CD8-positive, alpha-beta T cell (primary cell): ENCODE measurements at regions of chr6 and their contacts with region 1.

Region 1: GRCh38 chr6:134640975-134641429 is 308.9 kb downstream of the ALDH8A1 start:
- DNase-seq: peak; percentile 53 to 86 (median 77)
- ATAC-seq: peak; percentile 97
- H3K4me3 ChIP-seq: no peak overlapping the region
- H3K4me3 Mint-ChIP-seq: no peak overlapping the region
- H3K27ac ChIP-seq: no peak overlapping the region
- H3K27ac Mint-ChIP-seq: no peak overlapping the region
- H3K4me1 ChIP-seq: no peaks in the 10 kb centered on the region
- H3K4me1 Mint-ChIP-seq: peaks cover 10% of the 10 kb centered on the region
- H3K27me3 ChIP-seq: no peaks in the 10 kb centered on the region
- H3K27me3 Mint-ChIP-seq: no peaks in the 10 kb centered on the region
- CTCF ChIP-seq: peak; percentile 89

Region 2: GRCh38 chr6:134183844-134184243 is 457.2 kb before region 1 on chr6:
- CTCF ChIA-PET with region 1: interaction called, 65 read pairs
- POLR2A ChIA-PET with region 1: interaction called, 15 read pairs
- intact Hi-C with region 1: no loop called
- DNase-seq: no peak
- ATAC-seq: no peak
- H3K4me3 ChIP-seq: no peak overlapping the region
- H3K4me3 Mint-ChIP-seq: no peak overlapping the region
- H3K27ac ChIP-seq: no peak overlapping the region
- H3K27ac Mint-ChIP-seq: no peak overlapping the region
- H3K4me1 ChIP-seq: peaks cover 5% of the 10 kb centered on the region
- H3K4me1 Mint-ChIP-seq: peaks cover 17% of the 10 kb centered on the region
- H3K27me3 ChIP-seq: peaks cover 0 to 3% of the 10 kb centered on the region in 2 experiments
- H3K27me3 Mint-ChIP-seq: no peaks in the 10 kb centered on the region
- CTCF ChIP-seq: no peak

Region 3: GRCh38 chr6:134389129-134389528 is 251.9 kb before region 1 on chr6:
- CTCF ChIA-PET with region 1: no interaction called
- POLR2A ChIA-PET with region 1: no interaction called
- intact Hi-C with region 1: loop called in 1 of 2 experiments (anchors 5 kb)
- DNase-seq: peak in 1 of 9 experiments; percentile 27
- ATAC-seq: no peak
- H3K4me3 ChIP-seq: no peak overlapping the region
- H3K4me3 Mint-ChIP-seq: no peak overlapping the region
- H3K27ac ChIP-seq: no peak overlapping the region
- H3K27ac Mint-ChIP-seq: no peak overlapping the region
- H3K4me1 ChIP-seq: no peaks in the 10 kb centered on the region
- H3K4me1 Mint-ChIP-seq: no peaks in the 10 kb centered on the region
- H3K27me3 ChIP-seq: no peaks in the 10 kb centered on the region
- H3K27me3 Mint-ChIP-seq: no peaks in the 10 kb centered on the region
- CTCF ChIP-seq: no peak

Region 4: GRCh38 chr6:134551245-134551960 is 89.6 kb before region 1 on chr6:
- CTCF ChIA-PET with region 1: interaction called, 10 read pairs
- POLR2A ChIA-PET with region 1: no interaction called
- intact Hi-C with region 1: no loop called
- DNase-seq: no peak
- ATAC-seq: no peak
- H3K4me3 ChIP-seq: no peak overlapping the region
- H3K4me3 Mint-ChIP-seq: no peak overlapping the region
- H3K27ac ChIP-seq: no peak overlapping the region
- H3K27ac Mint-ChIP-seq: no peak overlapping the region
- H3K4me1 ChIP-seq: no peaks in the 10 kb centered on the region
- H3K4me1 Mint-ChIP-seq: no peaks in the 10 kb centered on the region
- H3K27me3 ChIP-seq: no peaks in the 10 kb centered on the region
- H3K27me3 Mint-ChIP-seq: no peaks in the 10 kb centered on the region
- CTCF ChIP-seq: no peak

Region 5: GRCh38 chr6:134822920-134823709 is 182.1 kb after region 1 on chr6:
- CTCF ChIA-PET with region 1: interaction called, 9 read pairs
- POLR2A ChIA-PET with region 1: no interaction called
- intact Hi-C with region 1: loop called (anchors 1 to 2 kb)
- DNase-seq: peak in 4 of 9 experiments; percentile 22 to 74 (median 58)
- ATAC-seq: peak; percentile 61
- H3K4me3 ChIP-seq: no peak overlapping the region
- H3K4me3 Mint-ChIP-seq: no peak overlapping the region
- H3K27ac ChIP-seq: no peak overlapping the region
- H3K27ac Mint-ChIP-seq: no peak overlapping the region
- H3K4me1 ChIP-seq: no peaks in the 10 kb centered on the region
- H3K4me1 Mint-ChIP-seq: peaks cover 4% of the 10 kb centered on the region
- H3K27me3 ChIP-seq: no peaks in the 10 kb centered on the region
- H3K27me3 Mint-ChIP-seq: peaks cover 6% of the 10 kb centered on the region
- CTCF ChIP-seq: peak; percentile 76

Region 6: GRCh38 chr6:135438907-135439535 is 798.0 kb after region 1 on chr6:
- CTCF ChIA-PET with region 1: no interaction called
- POLR2A ChIA-PET with region 1: no interaction called
- intact Hi-C with region 1: loop called (anchors 5 to 10 kb)
- DNase-seq: peak in 2 of 9 experiments; percentile 36 to 53
- ATAC-seq: peak; percentile 42
- H3K4me3 ChIP-seq: no peak overlapping the region
- H3K4me3 Mint-ChIP-seq: no peak overlapping the region
- H3K27ac ChIP-seq: no peak overlapping the region
- H3K27ac Mint-ChIP-seq: no peak overlapping the region
- H3K4me1 ChIP-seq: peaks cover 5% of the 10 kb centered on the region
- H3K4me1 Mint-ChIP-seq: peaks cover 18% of the 10 kb centered on the region
- H3K27me3 ChIP-seq: no peaks in the 10 kb centered on the region
- H3K27me3 Mint-ChIP-seq: no peaks in the 10 kb centered on the region
- CTCF ChIP-seq: peak; percentile 47